ENCODE measurements at regions of chr17 and their contacts with region 1.

Region 1: GRCh38 chr17:68356520-68356919 is 65.2 kb downstream of the ARSG start:
- DNase-seq: peak; percentile 65
- ATAC-seq: peak; percentile 94
- H3K4me3 Mint-ChIP-seq: peak overlapping the region; percentile 78
- H3K27ac Mint-ChIP-seq: peak overlapping the region; percentile 86
- H3K4me1 Mint-ChIP-seq: peaks cover 52% of the 10 kb centered on the region
- H3K27me3 Mint-ChIP-seq: no peaks in the 10 kb centered on the region

Region 2: DNA sequence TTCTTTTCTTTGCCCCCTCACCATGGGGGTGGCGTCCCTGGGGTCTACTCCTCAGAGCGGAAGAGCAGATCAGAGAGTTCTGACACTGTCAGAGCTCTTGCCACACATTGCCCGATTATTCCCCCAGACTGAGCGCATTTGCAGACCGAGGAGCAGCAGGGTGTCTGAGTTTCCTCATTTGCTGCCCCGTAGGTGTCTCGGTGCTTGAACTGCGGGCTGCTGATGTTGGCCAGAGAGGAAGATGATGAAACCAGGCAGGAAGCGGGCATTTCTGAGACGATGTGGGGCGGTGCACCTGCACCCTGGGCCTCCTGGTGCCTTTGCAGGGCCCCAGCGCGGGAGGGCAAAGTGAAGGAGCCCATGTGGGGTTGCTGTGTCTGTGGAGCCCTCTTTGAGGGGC is 10.1 kb before region 1 on chr17:
- POLR2A ChIA-PET with region 1: interaction called, 12 read pairs
- DNase-seq: peak; percentile 75
- ATAC-seq: peak; percentile 86
- H3K4me3 Mint-ChIP-seq: peak overlapping the region; percentile 75
- H3K27ac Mint-ChIP-seq: peak overlapping the region; percentile 97
- H3K4me1 Mint-ChIP-seq: peaks cover 69% of the 10 kb centered on the region
- H3K27me3 Mint-ChIP-seq: no peaks in the 10 kb centered on the region

Region 3: GRCh38 chr17:68398691-68399637 is 42.4 kb after region 1 on chr17:
- POLR2A ChIA-PET with region 1: interaction called, 11 read pairs
- DNase-seq: peak; percentile 52
- ATAC-seq: peak; percentile 79
- H3K4me3 Mint-ChIP-seq: peak overlapping the region; percentile 65
- H3K27ac Mint-ChIP-seq: peak overlapping the region; percentile 94
- H3K4me1 Mint-ChIP-seq: peaks cover 26% of the 10 kb centered on the region
- H3K27me3 Mint-ChIP-seq: no peaks in the 10 kb centered on the region

Measured in activated naive CD8-positive, alpha-beta T cell treated with anti-CD3 and anti-CD28 coated beads, Interleukin-2, amount 10 ng/mL, durations not matched to agents 7 days and 5 days (primary cell).